ENCODE measurements at regions of chr5 and their contacts with region 1.

Region 1: GRCh38 chr5:35926389-35927051 is 11.9 kb downstream of the CAPSL start:
- DNase-seq: peak; percentile 52
- ATAC-seq: peak; percentile 84
- H3K4me3 ChIP-seq: no peak overlapping the region
- H3K27ac ChIP-seq: no peak overlapping the region
- H3K4me1 ChIP-seq: no peaks in the 10 kb centered on the region
- H3K27me3 ChIP-seq: peaks cover 9% of the 10 kb centered on the region; the same call in 1 of the 2 replicates
- CTCF ChIP-seq: peak; percentile 84

Region 2: GRCh38 chr5:35089334-35090314 is 836.9 kb before region 1 on chr5:
- CTCF ChIA-PET with region 1: no interaction called
- POLR2A ChIA-PET with region 1: no interaction called
- in situ Hi-C with region 1: no loop called
- intact Hi-C with region 1: loop called (anchors 2 kb)
- DNase-seq: peak; percentile 54
- ATAC-seq: peak; percentile 76
- H3K4me3 ChIP-seq: no peak overlapping the region
- H3K27ac ChIP-seq: no peak overlapping the region
- H3K4me1 ChIP-seq: no peaks in the 10 kb centered on the region
- H3K27me3 ChIP-seq: no peaks in the 10 kb centered on the region
- CTCF ChIP-seq: peak; percentile 83

Region 3: DNA sequence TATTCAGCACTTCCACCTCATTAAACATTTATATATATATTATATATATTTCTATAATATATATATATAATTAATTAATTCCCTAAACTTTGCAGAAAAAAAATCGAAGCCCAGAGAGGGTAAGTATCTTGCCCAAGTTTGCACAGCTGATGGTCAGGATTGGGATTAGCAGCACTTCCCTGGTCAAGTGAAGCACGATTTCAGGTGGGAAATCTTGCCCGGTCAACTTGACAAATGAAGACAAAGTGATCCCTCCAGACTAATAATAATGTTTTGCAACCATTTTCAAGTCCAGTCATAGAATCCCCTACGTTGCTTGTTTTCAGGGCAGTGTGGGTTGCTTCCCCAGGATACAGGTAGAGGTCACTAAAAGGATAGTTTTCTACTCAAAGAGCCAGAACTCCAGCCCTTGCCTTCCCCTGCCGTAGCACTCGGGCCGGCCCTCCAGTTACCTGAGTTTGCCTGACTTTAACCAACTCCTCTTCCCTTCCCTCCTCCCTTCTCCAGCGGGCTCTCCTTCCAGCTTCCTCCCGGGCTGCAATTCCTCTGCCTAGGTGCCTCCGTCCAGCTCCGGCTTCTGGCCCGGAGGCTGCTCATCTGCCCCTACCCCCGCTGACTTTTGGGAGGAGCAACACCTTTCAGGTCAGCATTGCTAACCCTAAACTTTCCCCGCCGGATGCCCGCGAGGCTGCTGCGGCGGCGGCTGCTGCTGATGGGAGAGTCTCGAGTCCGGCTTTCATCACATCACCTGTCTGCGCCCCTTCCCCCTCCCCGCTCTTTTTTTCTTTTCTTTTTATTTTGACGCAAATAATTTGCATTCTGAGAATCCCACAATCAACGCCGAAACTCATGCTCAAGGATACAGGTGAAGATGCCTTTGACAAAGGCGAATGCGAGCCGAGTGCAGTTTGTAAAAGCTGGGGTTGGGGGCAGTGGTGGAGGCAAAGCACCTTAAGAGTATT is 697.2 kb before region 1 on chr5:
- CTCF ChIA-PET with region 1: no interaction called
- POLR2A ChIA-PET with region 1: no interaction called
- in situ Hi-C with region 1: no loop called
- intact Hi-C with region 1: loop called (anchors 5 kb)
- DNase-seq: no peak
- ATAC-seq: peak; percentile 80
- H3K4me3 ChIP-seq: peak overlapping the region; percentile 28 to 49
- H3K27ac ChIP-seq: no peak overlapping the region
- H3K4me1 ChIP-seq: peaks cover 4% of the 10 kb centered on the region; the same call in 1 of the 2 replicates
- H3K27me3 ChIP-seq: peaks cover 12% of the 10 kb centered on the region
- CTCF ChIP-seq: peak; percentile 21; the same call in 1 of the 2 replicates

Region 4: GRCh38 chr5:35626108-35626507 is 300.4 kb before region 1 on chr5:
- CTCF ChIA-PET with region 1: no interaction called
- POLR2A ChIA-PET with region 1: no interaction called
- in situ Hi-C with region 1: no loop called
- intact Hi-C with region 1: loop called (anchors 10 kb)
- DNase-seq: no peak
- ATAC-seq: no peak
- H3K4me3 ChIP-seq: no peak overlapping the region
- H3K27ac ChIP-seq: no peak overlapping the region
- H3K4me1 ChIP-seq: no peaks in the 10 kb centered on the region
- H3K27me3 ChIP-seq: no peaks in the 10 kb centered on the region
- CTCF ChIP-seq: no peak

Region 5: DNA sequence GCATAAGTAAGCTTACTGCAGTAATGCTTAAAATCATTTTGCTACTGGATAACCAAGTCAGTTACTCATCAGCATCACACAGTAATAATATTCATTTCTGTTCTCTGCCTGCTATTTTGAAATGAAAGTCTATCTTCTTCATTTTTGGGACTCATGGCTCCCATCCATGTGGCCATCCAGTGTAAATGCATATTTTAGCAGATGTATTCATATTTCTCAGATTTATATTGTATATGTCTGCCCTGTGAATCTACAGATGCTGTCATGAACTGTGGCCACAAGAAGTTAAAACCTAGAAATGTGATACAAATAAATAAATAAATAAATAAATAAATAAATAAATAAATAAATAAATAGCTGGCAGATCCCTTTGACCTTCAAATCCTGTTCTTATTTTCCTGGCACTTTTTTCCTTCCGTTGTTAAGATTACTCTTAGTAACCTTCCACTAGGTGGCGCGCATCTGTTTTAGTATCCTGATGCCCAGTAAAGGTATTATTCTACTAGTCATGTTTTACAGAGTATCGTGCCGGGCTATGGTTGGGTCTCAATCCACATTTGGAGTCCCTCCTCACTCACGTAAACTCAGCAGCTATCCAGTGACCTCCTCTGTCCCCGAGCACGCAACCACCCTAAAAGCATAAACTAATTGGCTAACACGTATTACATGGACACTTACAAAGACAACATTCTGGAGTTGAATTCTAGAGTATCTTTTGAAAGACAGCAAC is 149.0 kb before region 1 on chr5:
- CTCF ChIA-PET with region 1: no interaction called
- POLR2A ChIA-PET with region 1: no interaction called
- in situ Hi-C with region 1: no loop called
- intact Hi-C with region 1: loop called (anchors 1 kb)
- DNase-seq: peak; percentile 8
- ATAC-seq: 0 out of 2 replicates have a peak, but pooled peaks have one; percentile 53
- H3K4me3 ChIP-seq: no peak overlapping the region
- H3K27ac ChIP-seq: no peak overlapping the region
- H3K4me1 ChIP-seq: no peaks in the 10 kb centered on the region
- H3K27me3 ChIP-seq: no peaks in the 10 kb centered on the region
- CTCF ChIP-seq: peak; percentile 63

Region 6: GRCh38 chr5:35857606-35858205 is 68.8 kb before region 1 on chr5:
- CTCF ChIA-PET with region 1: interaction called, 11 read pairs
- POLR2A ChIA-PET with region 1: no interaction called
- in situ Hi-C with region 1: no loop called
- intact Hi-C with region 1: no loop called
- DNase-seq: no peak
- ATAC-seq: peak; percentile 30; the same call in 1 of the 2 replicates
- H3K4me3 ChIP-seq: no peak overlapping the region
- H3K27ac ChIP-seq: no peak overlapping the region
- H3K4me1 ChIP-seq: no peaks in the 10 kb centered on the region
- H3K27me3 ChIP-seq: no peaks in the 10 kb centered on the region
- CTCF ChIP-seq: no peak

Region 7: DNA sequence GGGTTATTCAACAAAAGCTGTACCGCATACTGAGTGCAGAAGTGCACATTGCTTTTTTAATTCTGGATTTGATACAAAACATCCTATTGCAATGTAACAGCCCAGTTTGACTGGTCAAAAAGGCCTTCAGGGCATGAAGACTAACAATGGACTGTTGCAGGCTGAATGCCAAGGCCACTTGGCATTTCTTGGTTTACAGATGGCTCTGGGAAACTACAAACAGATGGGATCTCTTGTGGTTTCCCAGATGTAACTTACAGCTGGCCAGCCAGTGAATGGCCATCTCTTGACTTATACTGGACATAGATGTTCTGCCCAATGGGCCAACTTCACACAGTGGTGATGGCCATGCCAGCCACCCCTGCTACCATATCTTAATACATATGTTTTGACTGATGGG is 103.4 kb after region 1 on chr5:
- CTCF ChIA-PET with region 1: no interaction called
- POLR2A ChIA-PET with region 1: no interaction called
- in situ Hi-C with region 1: no loop called
- intact Hi-C with region 1: no loop called
- DNase-seq: no peak
- ATAC-seq: no peak
- H3K4me3 ChIP-seq: no peak overlapping the region
- H3K27ac ChIP-seq: no peak overlapping the region
- H3K4me1 ChIP-seq: no peaks in the 10 kb centered on the region
- H3K27me3 ChIP-seq: no peaks in the 10 kb centered on the region
- CTCF ChIP-seq: no peak

Measured in Panc1 (cell line).